Cardiac septum (tissue), 1 donor: ENCODE measurements at regions of chr14 and their contacts with region 1.

Region 1: DNA sequence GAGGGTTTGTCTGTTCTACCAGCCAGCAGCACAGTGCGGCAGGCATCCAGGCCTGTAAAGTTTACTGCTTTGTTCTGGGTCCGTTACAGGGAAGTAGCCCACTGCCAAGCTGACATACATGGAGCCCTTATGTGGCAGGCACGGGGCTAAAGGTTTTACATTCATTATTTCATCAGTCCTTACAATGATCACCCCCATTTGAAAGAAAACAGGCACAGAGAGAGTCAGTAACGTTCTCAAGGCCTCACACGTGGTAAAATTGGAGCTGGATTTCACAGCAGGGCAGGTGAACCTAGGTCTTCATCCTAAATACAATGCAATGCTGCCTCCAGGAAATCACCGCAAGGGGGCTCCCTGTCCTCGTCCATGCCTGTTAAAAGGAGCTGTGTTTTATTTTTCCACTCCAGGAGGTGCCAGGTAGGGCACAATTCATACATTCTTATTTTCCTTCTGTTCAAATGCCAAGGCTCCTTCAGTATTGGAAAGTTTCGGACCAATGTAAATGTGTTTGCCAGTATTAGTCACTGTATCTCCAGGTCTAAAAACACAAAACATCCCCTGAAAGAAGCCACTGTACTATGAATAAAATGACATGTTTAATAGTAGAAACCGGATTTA is 172.2 kb upstream of the GZMB start:
- DNase-seq: no peak

Region 2: DNA sequence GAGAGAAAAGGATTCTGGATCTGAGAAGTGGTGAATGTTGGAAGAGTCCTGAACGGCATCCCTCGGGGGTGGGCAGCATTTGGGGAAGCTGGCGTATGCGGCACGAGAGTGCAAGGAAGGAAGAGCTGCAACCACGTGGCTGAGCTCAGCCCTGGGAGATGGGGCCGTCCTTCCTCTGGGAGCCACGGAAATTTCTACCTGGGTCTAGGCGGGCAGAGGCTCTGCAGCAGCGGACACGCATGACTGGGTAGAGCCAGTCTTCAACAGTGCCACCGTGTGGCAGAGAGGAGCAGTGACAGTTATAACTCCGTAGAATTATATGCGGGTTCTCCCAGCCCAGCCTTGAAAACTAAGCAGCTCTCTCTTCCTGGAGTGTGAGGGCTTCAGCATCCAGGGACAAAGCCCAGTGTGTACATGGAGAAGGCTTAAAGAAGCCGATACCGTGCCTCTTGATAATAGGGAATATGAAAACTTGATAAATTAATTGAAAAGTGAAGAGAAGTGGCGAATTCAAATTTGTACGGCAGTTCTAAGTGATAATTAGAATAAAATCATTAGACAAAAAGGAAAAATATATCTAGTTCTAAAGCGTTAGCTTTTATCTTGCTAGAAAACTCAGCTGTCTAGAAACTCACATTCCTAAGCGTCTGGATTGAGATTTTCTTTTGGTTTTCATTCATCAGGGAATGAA is 326.7 kb after region 1 on chr14:
- intact Hi-C with region 1: loop called (anchors 2 kb)
- DNase-seq: peak; percentile 80

Region 3: GRCh38 chr14:25150934-25151790 is 345.0 kb after region 1 on chr14:
- intact Hi-C with region 1: loop called (anchors 5 kb)
- DNase-seq: no peak